Activated CD8-positive, alpha-beta T cell treated with anti-CD3 and anti-CD28 coated beads, Interleukin-2, amount 10 ng/mL, durations not matched to agents 7 days and 5 days (primary cell): ENCODE measurements at regions of chr11 and their contacts with region 1.

Region 1: GRCh38 chr11:72722050-72722748 is 30.0 kb downstream of the ARAP1 start:
- DNase-seq: peak; percentile 91
- ATAC-seq: peak; percentile 91
- H3K4me3 Mint-ChIP-seq: peak overlapping the region; percentile 85
- H3K27ac Mint-ChIP-seq: peak overlapping the region; percentile 90
- H3K4me1 Mint-ChIP-seq: peaks cover 58% of the 10 kb centered on the region
- H3K27me3 Mint-ChIP-seq: no peaks in the 10 kb centered on the region

Region 2: GRCh38 chr11:72736452-72737069 is 14.4 kb after region 1 on chr11:
- CTCF ChIA-PET with region 1: interaction called, 30 read pairs
- POLR2A ChIA-PET with region 1: interaction called, 7 read pairs
- DNase-seq: peak; percentile 84
- ATAC-seq: peak; percentile 85
- H3K4me3 Mint-ChIP-seq: peak overlapping the region; percentile 54
- H3K27ac Mint-ChIP-seq: peak overlapping the region; percentile 99
- H3K4me1 Mint-ChIP-seq: peaks cover 58% of the 10 kb centered on the region
- H3K27me3 Mint-ChIP-seq: no peaks in the 10 kb centered on the region

Region 3: DNA sequence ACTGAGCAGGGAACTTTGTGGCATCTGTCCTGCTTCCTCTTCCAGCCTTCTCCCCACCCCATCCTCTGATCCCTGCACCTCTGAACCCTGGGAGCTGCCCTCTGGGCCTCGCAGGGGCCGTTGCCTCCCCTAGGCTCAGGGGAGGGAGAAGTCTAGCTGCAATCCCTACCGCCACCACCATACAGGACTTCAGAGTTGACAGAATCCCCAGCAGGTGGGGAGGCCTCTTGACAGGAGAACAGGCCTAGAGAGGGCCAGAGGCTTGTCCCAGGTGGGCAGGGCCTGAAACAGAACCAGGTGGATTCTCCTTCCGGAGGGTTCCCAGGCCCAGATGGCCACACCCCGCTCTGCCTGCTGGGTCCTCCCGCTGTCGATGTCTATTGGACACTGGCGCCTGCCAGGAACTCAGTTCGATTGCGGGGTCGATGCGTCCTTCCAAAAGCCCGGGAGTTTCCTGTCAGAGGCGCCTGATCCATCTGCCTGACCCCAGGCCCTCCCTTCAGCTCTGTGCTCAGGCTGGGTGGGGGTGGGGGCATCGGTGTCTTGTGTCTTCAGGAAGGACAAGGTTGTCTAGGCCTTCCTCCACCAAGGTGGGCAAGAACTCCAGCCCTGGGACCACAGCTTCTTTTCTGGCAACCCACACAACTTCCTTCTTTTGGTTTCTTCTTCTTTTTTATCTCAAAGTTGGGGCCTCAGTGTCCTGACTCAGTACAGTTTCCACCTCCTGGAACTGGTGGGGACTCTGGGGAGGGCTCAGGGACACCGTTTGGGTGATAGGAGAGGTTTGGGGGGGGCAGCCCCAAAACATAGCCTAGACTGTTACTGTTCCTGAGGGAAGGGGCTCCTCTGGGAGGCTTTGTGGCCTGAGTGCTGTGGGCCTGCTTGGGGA is 65.3 kb after region 1 on chr11:
- CTCF ChIA-PET with region 1: interaction called, 202 read pairs
- POLR2A ChIA-PET with region 1: interaction called, 9 read pairs
- DNase-seq: peak; percentile 42
- ATAC-seq: peak; percentile 70
- H3K4me3 Mint-ChIP-seq: peak overlapping the region; percentile 25
- H3K27ac Mint-ChIP-seq: peak overlapping the region; percentile 44
- H3K4me1 Mint-ChIP-seq: peaks cover 31% of the 10 kb centered on the region
- H3K27me3 Mint-ChIP-seq: peaks cover 4% of the 10 kb centered on the region

Region 4: GRCh38 chr11:72814286-72815109 is 92.3 kb after region 1 on chr11 and contains the start of gene ATG16L2:
- CTCF ChIA-PET with region 1: interaction called, 58 read pairs
- POLR2A ChIA-PET with region 1: interaction called, 13 read pairs
- DNase-seq: peak; percentile 88
- ATAC-seq: peak; percentile 74
- H3K4me3 Mint-ChIP-seq: peak within 1 kb of the TSS; percentile 100
- H3K27ac Mint-ChIP-seq: peak within 1 kb of the TSS; percentile 99
- H3K4me1 Mint-ChIP-seq: peaks cover 50% of the 10 kb centered on the region
- H3K27me3 Mint-ChIP-seq: no peaks in the 10 kb centered on the region
- total RNA-seq, gene ATG16L2: 104 to 105 TPM

Region 5: GRCh38 chr11:72831513-72832300 is 109.5 kb after region 1 on chr11:
- CTCF ChIA-PET with region 1: interaction called, 14 read pairs
- POLR2A ChIA-PET with region 1: interaction called, 3 read pairs
- DNase-seq: peak; percentile 48
- ATAC-seq: peak; percentile 66
- H3K4me3 Mint-ChIP-seq: no peak overlapping the region
- H3K27ac Mint-ChIP-seq: no peak overlapping the region
- H3K4me1 Mint-ChIP-seq: peaks cover 40% of the 10 kb centered on the region
- H3K27me3 Mint-ChIP-seq: no peaks in the 10 kb centered on the region